ENCODE measurements at regions of chr20 and their contacts with region 1.

Region 1: DNA sequence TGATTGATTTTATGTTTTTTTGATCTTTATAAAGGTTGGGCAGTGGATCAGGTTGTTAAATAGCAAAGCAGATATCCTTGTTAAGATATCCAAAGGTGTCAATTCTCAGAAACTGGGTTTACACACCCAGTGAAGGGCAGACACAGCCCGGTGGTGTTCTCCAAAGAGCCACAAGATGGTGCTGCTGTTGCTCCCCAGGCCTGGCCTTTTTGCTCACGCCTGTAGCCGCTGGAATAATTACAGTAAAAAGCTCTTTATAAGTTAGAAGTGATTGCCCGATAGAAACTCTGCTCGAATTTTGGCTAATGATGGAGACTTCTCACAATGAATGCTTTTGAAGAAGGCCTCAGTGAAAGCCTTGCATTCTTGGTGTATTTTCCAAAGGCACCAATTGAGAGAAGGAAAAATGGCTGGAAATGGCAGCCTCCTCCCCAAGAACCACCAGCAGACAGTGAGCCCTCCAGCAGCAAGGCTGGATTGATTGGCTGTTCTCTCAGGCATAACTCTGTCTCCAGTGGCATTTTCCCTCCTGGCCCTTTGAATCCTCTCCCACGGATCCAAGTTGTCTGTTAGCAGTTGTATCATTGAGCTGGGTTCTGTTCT is 120.5 kb upstream of the CHD6 start:
- DNase-seq: peak; percentile 79
- H3K27ac ChIP-seq: no peak overlapping the region
- CTCF ChIP-seq: peak; percentile 99

Region 2: DNA sequence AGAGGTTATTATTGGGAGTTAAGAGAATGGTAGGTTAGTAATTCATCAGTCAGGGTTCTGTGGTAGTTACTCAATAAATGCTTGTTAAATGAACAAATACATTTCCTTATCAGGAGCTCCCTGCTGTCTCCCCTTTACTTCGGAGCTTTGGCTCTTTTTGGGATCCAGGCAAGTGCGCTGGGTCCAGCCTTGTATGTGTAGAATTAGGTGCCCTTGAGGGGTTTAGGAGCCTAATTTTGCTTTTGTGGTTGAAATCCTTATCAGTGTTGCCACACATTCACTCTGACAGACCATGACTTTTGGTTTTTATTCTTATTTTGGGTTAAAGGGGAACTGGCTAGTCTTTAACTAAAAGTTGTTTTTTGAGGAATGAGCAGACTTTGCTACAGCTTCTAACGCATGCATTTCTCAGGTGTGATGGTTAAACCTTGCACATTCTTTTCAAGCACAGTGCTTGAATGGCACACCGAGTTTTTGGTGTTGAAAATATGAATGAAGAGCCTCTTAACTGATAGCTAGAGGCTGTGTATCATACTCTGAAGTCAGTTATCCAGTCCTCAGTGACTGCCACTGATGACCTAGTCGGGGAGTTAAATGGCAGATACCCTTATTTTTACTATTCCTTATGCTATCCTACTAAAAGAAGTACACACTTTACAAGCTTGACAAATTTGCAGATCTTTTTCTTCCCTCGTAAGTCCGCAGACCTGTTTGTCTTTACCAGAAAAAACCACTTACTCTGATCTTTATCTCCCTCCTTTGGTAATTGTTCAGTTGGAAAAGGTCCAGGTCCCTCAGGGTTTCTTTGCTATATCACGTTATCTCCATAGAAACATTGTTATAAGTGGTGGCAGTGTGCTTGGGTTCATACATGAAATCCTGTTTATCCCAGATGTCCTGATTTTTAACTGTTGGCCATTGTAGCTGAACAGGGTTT is 652.0 kb before region 1 on chr20:
- CTCF ChIA-PET with region 1: no interaction called
- POLR2A ChIA-PET with region 1: no interaction called
- DNase-seq: no peak
- H3K27ac ChIP-seq: no peak overlapping the region
- CTCF ChIP-seq: no peak

Region 3: DNA sequence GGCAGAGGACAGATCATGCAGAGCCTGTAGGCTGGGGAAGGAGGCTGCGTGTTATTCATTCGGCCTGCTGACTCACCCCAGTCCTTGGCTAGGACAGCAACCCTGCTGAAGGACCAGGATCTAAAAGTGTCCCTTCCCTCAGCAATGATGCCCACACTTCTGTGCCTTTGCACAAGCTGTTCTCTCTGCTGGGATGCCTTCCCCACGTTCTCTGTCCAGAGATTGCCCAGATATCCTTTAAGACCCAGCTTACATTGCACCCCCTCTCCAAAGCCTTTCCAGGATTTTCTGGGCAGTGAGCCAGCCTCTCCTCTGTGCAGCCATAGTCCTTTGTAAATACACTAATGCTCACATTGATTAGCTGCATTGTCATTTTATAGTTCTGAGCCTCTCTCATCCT is 21.2 kb before region 1 on chr20:
- CTCF ChIA-PET with region 1: interaction called, 16 read pairs
- POLR2A ChIA-PET with region 1: no interaction called
- DNase-seq: no peak
- H3K27ac ChIP-seq: no peak overlapping the region
- CTCF ChIP-seq: no peak

Region 4: GRCh38 chr20:41833739-41834138 is 95.0 kb after region 1 on chr20:
- CTCF ChIA-PET with region 1: no interaction called
- POLR2A ChIA-PET with region 1: no interaction called
- DNase-seq: no peak
- H3K27ac ChIP-seq: no peak overlapping the region
- CTCF ChIP-seq: no peak

Region 5: DNA sequence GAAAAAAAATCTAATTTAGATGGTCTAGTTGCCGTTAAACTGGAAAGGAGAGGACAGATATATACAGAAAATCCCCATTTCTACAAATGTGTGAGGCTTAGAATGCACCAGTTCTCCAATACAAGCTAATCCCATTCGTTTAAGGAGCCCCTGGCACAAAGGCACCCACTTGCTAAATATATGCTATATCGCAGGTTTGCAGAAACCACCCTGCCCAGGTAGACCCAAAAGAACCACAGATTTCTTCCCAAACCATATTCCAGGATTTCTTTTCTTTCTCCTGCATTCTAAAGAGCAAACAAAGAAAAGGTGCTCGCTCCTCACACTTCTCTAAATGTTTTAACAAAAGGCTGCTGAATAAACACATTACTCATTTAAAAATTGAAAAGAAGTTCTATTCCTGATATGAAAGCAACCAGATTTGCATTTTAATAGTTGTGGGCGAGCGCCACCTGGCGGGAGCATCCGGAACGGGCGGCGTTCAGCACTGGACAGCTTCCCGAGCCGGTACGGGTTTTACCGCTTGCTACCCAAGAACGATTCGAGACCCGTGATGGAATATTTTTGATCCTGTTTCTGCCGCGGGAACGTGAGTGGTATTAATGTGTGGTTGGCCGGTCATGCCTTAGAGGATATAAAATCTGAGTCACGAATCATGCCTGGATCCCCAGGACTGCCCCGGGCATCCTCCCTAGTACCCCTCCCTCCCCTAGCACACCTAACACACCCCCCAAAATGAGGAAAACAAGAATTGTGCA is 1449.0 kb after region 1 on chr20:
- CTCF ChIA-PET with region 1: interaction called, 12 read pairs
- POLR2A ChIA-PET with region 1: no interaction called
- DNase-seq: peak; percentile 93
- H3K27ac ChIP-seq: no peak overlapping the region
- CTCF ChIP-seq: peak; percentile 99